ENCODE measurements at regions of chr13 and their contacts with region 1.

Region 1: DNA sequence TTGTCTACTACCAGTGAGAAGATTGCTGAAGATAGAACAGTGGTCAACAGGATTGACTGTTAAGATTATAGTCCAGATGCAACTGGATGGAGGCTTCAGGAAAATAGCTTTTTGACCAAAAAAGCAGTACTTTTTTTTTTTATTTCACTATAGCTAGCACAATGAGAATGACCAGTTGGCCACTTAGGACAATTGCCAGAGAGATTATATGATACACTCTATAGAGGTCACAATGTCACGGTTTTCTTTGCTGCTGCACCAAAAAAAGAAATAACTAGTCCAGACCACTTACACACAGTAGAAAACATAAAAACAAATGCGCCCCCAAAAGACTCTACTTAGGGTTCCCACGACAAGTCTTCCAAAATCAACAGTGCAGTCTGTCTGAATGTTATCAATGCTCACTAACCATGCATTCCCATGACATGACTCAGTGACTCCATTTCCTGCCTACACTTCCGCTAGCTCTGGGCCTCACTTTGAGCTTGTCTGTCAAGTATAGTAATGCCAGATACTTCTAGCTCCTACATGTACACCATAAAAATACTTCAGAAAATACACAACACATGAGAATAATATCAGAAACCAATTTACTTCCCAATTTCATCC is 209.1 kb upstream of the STARD13 start:
- DNase-seq: no peak

Region 2: GRCh38 chr13:32804673-32805230 is 689.9 kb before region 1 on chr13:
- intact Hi-C with region 1: loop called in 1 of 2 experiments (anchors 5 kb)
- DNase-seq: no peak

Region 3: DNA sequence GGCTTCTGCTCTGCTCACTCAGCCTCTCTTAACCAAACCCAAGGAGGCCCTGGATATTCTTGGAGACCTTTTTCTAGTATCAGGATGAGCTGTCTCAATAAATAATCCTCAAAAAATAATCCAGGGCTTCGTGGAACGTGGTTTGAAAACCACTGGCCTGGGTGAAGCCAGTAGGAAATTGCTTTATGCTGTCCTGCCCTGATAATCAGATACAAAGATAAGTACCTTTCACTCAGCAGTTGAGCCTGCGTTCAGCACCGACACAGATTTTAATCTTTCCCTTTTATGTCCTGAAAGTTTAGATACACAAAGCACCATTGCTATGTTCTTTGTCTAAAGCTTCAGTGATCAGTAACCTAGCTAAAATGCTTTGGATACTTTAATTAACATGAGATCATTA is 783.2 kb after region 1 on chr13:
- intact Hi-C with region 1: no loop called
- DNase-seq: no peak